PC-9 (cell line): ENCODE measurements at regions of chr21 and their contacts with region 1.

Region 1: DNA sequence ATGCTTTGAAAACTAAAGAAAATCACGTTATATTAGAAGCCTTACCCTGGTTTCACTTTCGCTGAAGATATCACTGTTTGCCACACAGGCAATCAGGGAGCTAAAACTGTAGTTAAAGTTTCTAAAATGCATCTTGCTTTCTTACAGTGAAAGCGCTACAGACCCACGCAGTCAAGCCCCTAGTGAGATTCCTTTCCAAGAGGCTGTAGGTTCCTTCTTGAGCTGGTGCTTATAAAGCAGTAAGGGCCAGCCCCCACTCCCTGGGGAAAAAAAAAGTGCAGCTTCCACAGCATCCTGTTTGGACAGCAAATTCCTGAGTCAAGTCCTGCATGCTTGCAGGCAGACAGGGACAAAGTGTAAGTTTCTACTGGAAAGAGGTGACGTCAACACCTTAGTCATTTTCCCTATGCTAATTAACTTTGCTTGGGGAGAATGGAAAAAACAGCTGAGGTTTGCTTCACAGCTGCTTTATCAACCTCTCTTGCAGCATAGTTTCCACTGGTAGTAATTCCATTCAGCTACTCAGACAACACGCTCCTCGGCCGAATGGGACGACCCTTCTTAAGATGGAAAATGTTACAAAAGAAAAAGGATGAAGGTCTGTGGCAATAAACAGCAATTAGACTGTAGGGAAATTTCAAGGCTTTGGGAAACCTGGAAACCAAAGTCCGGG is 14.7 kb upstream of the KCNE1 start:
- DNase-seq: peak; percentile 71 to 96
- H3K4me3 ChIP-seq: peak overlapping the region; percentile 70
- H3K27ac ChIP-seq: peak overlapping the region; percentile 92
- H3K4me1 ChIP-seq: peaks cover 23% of the 10 kb centered on the region
- H3K27me3 ChIP-seq: no peaks in the 10 kb centered on the region
- CTCF ChIP-seq: no peak

Region 2: GRCh38 chr21:34545079-34545884 is 18.5 kb after region 1 on chr21:
- CTCF ChIA-PET with region 1: interaction called, 5 read pairs
- POLR2A ChIA-PET with region 1: interaction called, 3 read pairs
- intact Hi-C with region 1: loop called (anchors 1 kb)
- DNase-seq: peak; percentile 65 to 98
- H3K4me3 ChIP-seq: peak overlapping the region; percentile 35; the same call in 1 of the 2 replicates
- H3K27ac ChIP-seq: peak overlapping the region; percentile 100
- H3K4me1 ChIP-seq: peaks cover 50% of the 10 kb centered on the region
- H3K27me3 ChIP-seq: no peaks in the 10 kb centered on the region
- CTCF ChIP-seq: no peak